Adrenal gland (tissue), 19 donors: ENCODE measurements at regions of chr6 and their contacts with region 1.

Region 1: DNA sequence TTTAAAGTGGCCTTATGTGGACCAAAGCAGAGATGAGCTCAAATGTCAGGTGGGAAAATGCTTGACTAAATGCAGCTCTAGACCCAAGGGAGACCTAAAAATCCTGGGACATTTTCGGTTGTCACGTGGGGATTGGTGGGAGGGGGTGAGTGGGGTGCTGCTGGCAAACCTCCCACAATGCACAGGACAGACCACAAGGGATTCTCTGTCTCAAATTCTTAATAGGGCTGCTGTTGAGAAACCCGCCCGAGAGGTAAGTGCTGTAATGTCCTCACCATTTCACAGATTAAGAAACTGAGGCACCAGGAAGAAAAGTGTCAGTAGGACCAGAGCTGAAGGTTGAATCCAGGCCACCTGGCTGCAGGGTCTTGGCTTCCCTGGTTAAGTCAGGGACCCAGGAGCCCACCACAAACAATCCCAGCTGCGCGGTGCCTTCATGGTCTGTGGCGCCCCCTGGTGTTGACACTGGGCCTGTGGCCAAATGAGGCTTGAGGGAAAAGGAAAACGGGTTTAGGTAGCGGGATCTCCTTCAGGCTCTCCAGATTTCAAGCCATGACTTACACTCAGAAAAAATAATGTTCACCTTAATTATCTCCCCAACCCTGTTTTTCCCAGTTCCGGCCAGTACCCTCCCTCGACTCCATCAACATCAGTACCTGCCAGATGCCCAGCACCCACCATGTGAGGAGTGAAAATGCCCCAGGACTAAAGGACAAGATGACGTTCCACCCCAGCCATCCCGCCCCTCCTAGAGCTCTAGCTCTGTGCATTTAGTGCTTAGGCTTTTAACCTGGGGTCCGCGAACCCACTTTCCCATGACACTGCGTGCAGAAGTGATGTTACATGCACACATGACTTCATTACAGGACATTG is 7.2 kb downstream of the HLA-G start:
- DNase-seq: peak in 6 of 7 donors; percentile 24 to 63 (median 40)
- H3K4me3 ChIP-seq: no peak overlapping the region
- H3K27ac ChIP-seq: no peak overlapping the region
- H3K4me1 ChIP-seq: no peaks in the 10 kb centered on the region
- H3K27me3 ChIP-seq: peaks cover 22% of the 10 kb centered on the region
- CTCF ChIP-seq: peak; percentile 40 to 95 (median 77)
- POLR2A ChIP-seq: no peak

Region 2: DNA sequence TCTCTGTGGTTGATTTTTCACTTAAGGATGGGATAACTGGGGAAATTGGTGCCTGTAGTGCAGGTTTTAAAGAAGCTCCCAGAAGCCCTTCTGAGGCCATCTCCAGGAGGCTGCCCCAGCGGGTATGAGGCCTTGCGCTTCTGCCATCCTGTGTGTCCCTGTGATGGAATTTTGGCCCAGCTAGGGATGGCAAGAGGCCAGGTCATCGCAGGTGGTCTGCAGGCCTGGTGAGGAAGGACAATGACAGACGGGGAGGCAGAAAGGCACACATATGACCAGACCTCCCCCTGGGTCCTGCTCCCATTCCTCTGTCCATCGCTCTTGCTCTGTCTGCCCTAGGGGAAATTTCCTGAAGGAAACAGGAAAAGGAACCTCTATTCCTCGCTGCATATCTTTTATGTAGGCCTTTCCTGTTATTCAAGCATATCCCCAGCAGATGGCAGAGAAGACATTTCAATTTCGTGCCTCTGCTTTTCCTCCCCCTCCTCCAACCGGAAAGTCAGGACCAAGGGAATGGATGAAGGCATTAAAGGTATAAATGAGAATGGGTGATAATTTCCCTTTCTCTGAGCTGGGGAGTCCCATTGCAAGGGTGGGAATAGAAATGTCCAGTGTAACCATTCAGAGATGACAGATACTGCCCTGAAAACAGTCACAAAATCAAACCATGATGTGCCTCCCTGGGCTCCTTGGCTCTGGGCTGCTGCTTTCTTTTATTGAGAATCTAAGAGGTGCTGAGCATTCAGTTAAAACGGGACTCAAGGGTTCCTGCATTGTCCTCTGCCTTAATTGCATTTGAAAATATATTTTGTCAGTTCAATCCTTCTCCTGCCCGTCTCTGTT is 129.2 kb before region 1 on chr6:
- intact Hi-C with region 1: loop called (anchors 2 to 5 kb)
- DNase-seq: peak; percentile 37 to 64 (median 47)
- H3K4me3 ChIP-seq: no peak overlapping the region
- H3K27ac ChIP-seq: no peak overlapping the region
- H3K4me1 ChIP-seq: no peaks in the 10 kb centered on the region
- H3K27me3 ChIP-seq: peaks cover 8% of the 10 kb centered on the region
- CTCF ChIP-seq: peak; percentile 46 to 80 (median 68)
- POLR2A ChIP-seq: no peak

Region 3: DNA sequence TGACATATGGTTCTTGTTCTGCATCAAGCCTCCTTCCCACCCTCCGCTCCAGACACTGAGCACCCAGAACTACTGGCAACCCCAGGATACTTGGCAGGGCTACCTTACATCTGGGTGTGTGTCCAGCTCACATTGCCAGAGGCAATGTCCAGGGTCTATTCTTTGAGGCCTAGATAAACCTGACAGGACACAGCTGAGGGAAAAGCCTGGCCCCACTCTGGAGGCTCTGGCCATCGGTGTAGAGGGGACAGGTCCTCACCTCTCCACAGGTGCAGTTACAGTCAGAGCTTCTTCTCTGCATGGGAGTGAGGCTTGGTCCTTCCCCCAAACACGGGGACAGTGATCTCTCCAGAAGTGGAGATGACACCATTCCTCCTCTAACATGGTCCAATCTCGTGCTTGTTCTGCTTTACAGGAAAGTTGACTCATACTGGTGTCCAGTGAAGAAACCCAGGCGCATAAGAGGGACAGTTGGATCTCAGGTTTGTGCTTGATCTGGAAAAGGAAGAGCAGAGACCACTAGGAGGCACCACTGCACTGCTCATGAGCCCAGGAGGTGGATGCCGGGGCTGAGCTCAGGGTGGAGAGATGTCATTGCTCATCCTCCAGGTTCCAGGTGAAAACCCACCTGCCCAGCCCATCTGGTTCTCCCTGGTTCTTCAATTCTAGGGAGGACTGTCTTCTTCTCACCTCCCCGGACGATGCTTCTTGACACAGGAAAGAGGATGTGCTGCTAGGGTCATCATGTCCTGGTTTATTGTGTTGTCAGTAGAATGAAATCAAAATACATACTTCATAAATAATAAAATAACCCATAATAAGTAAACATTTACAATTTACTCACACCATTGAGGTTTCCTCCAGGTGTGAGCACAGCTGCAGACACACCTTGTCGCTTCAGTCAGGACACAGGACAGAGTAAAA is 96.8 kb before region 1 on chr6:
- intact Hi-C with region 1: loop called (anchors 10 kb)
- DNase-seq: peak; percentile 70 to 85 (median 81)
- H3K4me3 ChIP-seq: no peak overlapping the region
- H3K27ac ChIP-seq: no peak overlapping the region
- H3K4me1 ChIP-seq: no peaks in the 10 kb centered on the region
- H3K27me3 ChIP-seq: no peaks in the 10 kb centered on the region
- CTCF ChIP-seq: peak; percentile 41 to 89 (median 79)
- POLR2A ChIP-seq: no peak

Region 4: DNA sequence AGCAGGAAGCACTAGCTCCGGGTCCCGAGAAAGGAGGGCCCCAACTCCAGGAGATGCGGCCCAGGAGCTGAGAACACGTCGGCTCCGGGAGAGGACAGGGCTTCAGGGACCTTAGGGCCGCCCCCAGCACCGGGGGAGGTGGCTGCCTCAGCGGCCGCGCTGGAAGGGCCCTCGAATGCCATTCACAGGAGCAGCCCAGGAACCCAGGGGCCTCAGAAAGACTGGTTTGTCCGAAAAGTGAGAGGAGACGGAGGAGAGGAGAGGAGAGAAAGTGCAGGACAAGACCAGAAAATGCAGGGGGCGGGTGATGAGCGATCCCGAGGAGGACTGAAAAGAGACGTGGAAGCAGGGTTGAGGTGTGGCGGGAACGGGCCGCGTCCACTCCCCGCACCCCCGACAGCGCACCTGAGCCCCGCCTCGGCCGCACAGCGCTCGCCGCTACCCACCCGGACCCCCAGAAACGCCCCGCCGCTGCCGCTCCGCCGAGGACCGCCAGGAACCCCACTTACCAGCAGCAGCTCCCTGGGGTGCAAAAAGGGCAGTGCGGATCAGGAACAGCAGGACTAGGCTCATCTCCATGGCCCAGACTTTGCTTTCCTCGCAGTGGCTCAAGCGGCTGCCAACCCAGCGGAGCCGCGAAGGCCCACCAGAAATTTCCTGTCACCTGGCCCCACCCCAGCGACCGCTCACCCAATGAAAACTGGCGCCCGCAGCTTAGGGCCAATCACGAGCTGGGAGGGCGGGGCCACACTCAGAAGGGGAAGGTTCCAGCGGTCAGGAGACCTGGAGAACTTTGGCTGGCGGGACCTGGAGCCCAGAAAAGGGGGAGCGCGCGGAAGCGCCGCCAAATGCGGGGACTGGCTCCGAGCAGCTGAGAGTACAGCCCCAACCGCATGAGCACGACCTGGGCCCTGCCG is 86.2 kb before region 1 on chr6:
- intact Hi-C with region 1: loop called in 1 of 2 experiments (anchors 10 kb)
- DNase-seq: peak; percentile 93 to 98 (median 96)
- H3K4me3 ChIP-seq: peak overlapping the region; percentile 46 to 83 (median 72)
- H3K27ac ChIP-seq: peak overlapping the region in 3 of 5 donors; percentile 24 to 76 (median 69)
- H3K4me1 ChIP-seq: peaks cover 16 to 18% of the 10 kb centered on the region in 2 donors
- H3K27me3 ChIP-seq: no peaks in the 10 kb centered on the region
- CTCF ChIP-seq: no peak
- POLR2A ChIP-seq: peak; percentile 25 to 77